PC-3 (cell line): ENCODE measurements at regions of chr2 and their contacts with region 1.

Region 1: GRCh38 chr2:223970343-223971128 is 13.3 kb downstream of the MRPL44 start:
- DNase-seq: peak; percentile 85
- ATAC-seq: peak; percentile 68
- H3K4me3 ChIP-seq: no peak overlapping the region
- H3K27ac ChIP-seq: no peak overlapping the region
- H3K4me1 ChIP-seq: peaks cover 15% of the 10 kb centered on the region
- H3K27me3 ChIP-seq: no peaks in the 10 kb centered on the region
- CTCF ChIP-seq: peak; percentile 94

Region 2: GRCh38 chr2:224357098-224357901 is 386.8 kb after region 1 on chr2:
- CTCF ChIA-PET with region 1: interaction called, 5 read pairs
- POLR2A ChIA-PET with region 1: no interaction called
- intact Hi-C with region 1: loop called (anchors 2 kb)
- DNase-seq: peak; percentile 75
- ATAC-seq: peak; percentile 47
- H3K4me3 ChIP-seq: no peak overlapping the region
- H3K27ac ChIP-seq: no peak overlapping the region
- H3K4me1 ChIP-seq: peaks cover 16% of the 10 kb centered on the region
- H3K27me3 ChIP-seq: no peaks in the 10 kb centered on the region; the same call in 1 of the 2 replicates
- CTCF ChIP-seq: peak; percentile 87

Region 3: DNA sequence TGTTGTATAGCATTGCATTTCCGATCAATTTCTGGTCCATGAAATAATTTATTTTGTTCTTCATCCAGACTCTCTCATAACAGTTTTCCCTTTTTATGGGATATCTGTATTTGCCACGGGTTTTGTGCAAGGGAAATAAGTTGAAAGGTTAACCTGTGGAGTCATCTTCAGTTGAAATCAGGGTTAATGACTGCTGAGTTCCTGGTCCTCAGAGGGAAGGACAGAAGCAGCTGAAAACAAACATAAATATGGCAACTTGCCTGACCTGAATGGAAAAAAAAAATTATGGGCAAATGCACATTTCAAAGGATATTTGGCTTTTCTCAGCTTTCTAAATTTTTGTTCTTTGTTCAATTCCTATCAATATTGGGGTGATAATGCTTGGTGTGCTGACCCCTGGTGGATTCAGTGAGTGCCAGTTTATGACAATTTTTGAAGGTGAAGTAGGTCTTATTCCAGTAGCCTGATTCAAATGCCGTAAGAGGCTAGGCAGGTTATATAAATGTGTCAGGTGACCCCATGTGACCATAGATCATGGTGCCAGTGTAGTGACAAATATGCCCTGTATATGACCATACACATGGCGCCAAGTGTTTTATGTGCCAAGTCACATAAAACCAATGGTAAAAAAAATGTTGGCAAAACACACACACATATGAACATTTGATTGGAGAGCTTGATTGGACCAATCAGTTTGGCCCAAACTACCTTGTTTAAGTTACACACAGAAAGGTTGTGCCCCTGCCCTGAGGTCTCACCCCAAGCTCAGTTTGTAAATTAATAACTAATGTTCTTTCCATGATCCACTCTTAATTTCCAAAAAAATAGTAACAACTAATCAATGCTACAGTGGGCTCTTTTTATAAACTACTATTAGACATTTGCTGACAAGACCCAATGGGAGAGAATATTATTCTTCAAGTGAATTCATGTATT is 478.9 kb after region 1 on chr2:
- CTCF ChIA-PET with region 1: no interaction called
- POLR2A ChIA-PET with region 1: no interaction called
- intact Hi-C with region 1: loop called (anchors 5 kb)
- DNase-seq: peak; percentile 48
- ATAC-seq: peak; percentile 55
- H3K4me3 ChIP-seq: no peak overlapping the region
- H3K27ac ChIP-seq: no peak overlapping the region
- H3K4me1 ChIP-seq: peaks cover 4% of the 10 kb centered on the region; the same call in 1 of the 2 replicates
- H3K27me3 ChIP-seq: no peaks in the 10 kb centered on the region
- CTCF ChIP-seq: peak; percentile 82

Region 4: GRCh38 chr2:224778474-224778877 is 807.9 kb after region 1 on chr2:
- CTCF ChIA-PET with region 1: no interaction called
- POLR2A ChIA-PET with region 1: no interaction called
- intact Hi-C with region 1: loop called (anchors 10 kb)
- DNase-seq: peak; percentile 77
- ATAC-seq: peak; percentile 73
- H3K4me3 ChIP-seq: no peak overlapping the region
- H3K27ac ChIP-seq: no peak overlapping the region
- H3K4me1 ChIP-seq: no peaks in the 10 kb centered on the region
- H3K27me3 ChIP-seq: no peaks in the 10 kb centered on the region
- CTCF ChIP-seq: peak; percentile 89